Mucosa of descending colon (tissue), 3 donors: ENCODE measurements at regions of chr2 and their contacts with region 1.

Region 1: DNA sequence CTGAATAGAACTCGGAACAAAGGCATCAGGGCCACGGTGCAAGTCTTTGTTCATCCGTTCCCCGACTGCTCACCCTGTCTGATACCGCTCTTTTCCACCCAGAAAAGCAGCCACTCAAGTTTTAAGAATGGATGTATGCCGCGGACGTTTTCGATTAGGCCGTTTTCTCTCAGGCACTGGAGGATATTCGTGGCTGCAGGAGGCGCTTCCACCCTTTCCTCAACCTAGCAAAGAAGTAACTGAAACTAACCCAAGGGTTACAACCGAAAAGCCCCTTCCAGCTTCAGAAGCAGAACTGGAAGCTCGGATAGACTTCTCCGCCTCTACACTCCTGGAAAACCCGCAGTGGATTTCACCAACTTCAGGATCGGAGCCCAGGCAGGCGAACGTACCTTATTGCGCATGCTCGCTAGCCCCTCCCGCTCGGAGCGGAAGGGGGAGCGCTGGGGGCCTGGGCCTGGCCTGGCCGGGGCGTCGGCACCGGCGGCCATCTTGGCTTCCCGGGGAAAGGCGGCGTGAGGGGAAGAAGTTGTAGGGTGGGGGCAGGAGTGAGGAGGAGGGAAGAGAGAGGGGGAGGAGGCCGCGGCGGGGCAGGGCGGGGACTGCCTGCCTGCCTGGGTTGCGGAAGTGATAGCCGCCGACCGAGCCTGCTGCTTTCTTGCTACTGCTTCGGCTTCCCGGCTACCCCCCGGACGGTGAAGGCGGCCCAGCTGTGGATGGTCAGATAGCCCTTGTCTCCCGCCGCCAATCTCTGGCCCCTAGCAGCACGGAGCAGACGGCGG is at the start of gene ACTR3:
- DNase-seq: peak; percentile 99 to 100 (median 99)
- ATAC-seq: peak; percentile 92
- H3K4me3 ChIP-seq: peak within 1 kb of the TSS; percentile 86
- H3K4me1 ChIP-seq: peaks cover 49% of the 10 kb centered on the region
- CTCF ChIP-seq: no peak
- total RNA-seq, gene ACTR3: 217 to 242 (median 227) TPM

Region 2: DNA sequence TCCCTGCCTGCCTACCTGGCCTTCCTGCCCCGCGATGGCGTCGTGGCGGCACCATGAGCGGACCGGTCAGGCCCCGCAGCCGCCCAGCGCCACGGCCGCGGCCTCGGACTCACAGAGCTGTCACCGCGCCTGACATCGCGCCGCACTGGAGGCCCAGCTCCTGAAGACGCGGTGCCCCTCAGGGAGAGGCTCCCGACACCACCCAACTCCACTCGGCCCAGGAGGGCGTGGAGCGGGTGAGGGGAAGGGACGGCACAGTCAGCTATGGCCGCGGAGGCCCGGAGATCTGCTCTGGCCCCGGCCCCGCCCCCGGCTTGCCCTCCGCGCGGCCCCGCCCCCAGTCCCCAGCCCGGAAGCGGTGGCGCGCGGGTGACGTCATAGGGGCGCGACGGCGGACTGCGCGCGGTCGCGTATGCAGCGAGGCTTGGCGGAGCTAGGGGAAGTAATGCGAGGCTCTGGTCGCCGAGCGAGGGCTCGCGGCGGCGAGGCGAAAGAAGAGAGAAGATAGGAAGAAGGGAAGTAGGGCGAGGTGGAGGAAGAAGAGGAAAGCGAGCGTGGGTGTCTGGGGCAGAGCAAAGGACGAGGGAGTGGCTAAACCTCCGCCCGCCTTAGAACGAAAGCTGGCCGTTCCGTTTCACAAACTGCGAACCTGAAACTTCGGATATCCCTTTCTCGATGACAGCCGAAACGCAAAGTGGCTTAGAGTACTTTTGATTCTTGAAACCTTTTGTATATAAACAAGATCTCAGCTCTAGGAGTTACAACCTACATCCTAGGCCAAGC is 133.1 kb before region 1 on chr2 and contains the start of gene SLC35F5:
- intact Hi-C with region 1: loop called in 1 of 2 experiments (anchors 5 kb)
- DNase-seq: peak; percentile 95 to 97 (median 96)
- ATAC-seq: peak; percentile 96
- H3K4me3 ChIP-seq: peak within 1 kb of the TSS; percentile 96
- H3K4me1 ChIP-seq: peaks cover 30% of the 10 kb centered on the region
- CTCF ChIP-seq: no peak
- total RNA-seq, gene SLC35F5: 78.8 to 132 (median 125) TPM

Region 3: GRCh38 chr2:113959202-113959601 is 69.5 kb after region 1 on chr2:
- intact Hi-C with region 1: loop called in 1 of 2 experiments (anchors 10 kb)
- DNase-seq: no peak
- ATAC-seq: no peak
- H3K4me3 ChIP-seq: no peak overlapping the region
- H3K4me1 ChIP-seq: no peaks in the 10 kb centered on the region
- CTCF ChIP-seq: no peak